BJ (cell line): ENCODE measurements at regions of chr3 and their contacts with region 1.

Region 1: DNA sequence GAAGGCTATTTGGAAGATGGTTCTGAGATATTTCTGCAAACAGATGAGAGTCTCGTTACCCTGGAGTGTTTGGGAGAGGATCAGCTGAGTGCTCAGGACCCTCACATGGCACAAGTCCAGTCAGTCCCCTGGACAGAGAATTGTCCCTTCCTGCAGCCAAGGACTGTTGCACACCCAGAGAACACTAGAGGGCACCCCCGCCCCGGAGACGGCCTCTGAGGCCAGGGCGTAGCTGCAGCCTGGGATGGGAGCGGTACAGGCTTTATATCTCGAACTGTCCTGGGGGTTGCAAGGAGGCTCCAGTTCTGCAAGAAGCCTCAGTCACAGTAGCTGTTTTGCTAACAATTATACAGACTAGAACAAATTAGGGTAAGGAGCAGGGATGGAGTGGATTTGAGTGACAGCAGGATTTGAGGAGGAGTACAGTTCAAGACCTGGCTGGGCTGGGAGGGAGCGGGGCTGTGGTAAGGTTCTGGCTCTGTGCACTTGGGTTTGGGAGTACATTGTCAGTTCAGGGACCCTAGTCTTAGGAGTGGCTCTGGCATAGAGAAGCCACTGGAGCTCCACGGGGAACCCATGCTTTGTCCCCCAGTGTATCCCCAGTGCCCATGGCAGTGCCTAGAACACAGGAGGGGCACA is 67.6 kb upstream of the HACD2 start:
- DNase-seq: no peak
- H3K4me3 ChIP-seq: no peak overlapping the region
- H3K27me3 ChIP-seq: no peaks in the 10 kb centered on the region
- CTCF ChIP-seq: peak; percentile 84

Region 2: GRCh38 chr3:123642182-123642956 is 10.1 kb before region 1 on chr3:
- CTCF ChIA-PET with region 1: interaction called, 104 read pairs
- POLR2A ChIA-PET with region 1: interaction called, 3 read pairs
- DNase-seq: peak; percentile 59
- H3K4me3 ChIP-seq: no peak overlapping the region
- H3K27me3 ChIP-seq: no peaks in the 10 kb centered on the region
- CTCF ChIP-seq: peak; percentile 89

Region 3: GRCh38 chr3:123694366-123695145 is 42.1 kb after region 1 on chr3:
- CTCF ChIA-PET with region 1: interaction called, 17 read pairs
- POLR2A ChIA-PET with region 1: no interaction called
- DNase-seq: no peak
- H3K4me3 ChIP-seq: no peak overlapping the region
- H3K27me3 ChIP-seq: no peaks in the 10 kb centered on the region
- CTCF ChIP-seq: no peak

Region 4: DNA sequence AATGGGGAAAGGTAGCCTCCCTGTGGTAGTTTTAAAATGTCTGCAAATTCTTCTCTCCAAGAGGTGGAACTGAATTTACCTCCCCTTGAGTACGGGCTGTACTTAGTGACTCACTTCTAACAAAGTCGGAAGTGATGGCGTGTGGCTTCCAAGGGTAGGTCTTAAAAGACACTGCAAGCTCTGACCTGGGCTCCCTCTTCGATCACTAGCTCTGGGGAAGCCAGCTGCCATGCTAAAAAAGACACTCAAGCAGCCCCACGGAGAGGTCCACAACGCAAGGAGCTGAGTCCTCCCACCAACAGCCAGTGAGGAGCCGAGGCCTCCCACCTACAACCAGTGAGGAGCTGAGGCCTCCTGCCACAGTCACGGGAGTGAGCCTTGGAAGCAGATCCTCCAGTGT is 54.4 kb after region 1 on chr3:
- CTCF ChIA-PET with region 1: interaction called, 22 read pairs
- POLR2A ChIA-PET with region 1: no interaction called
- DNase-seq: no peak
- H3K4me3 ChIP-seq: no peak overlapping the region
- H3K27me3 ChIP-seq: no peaks in the 10 kb centered on the region
- CTCF ChIP-seq: no peak

Region 5: DNA sequence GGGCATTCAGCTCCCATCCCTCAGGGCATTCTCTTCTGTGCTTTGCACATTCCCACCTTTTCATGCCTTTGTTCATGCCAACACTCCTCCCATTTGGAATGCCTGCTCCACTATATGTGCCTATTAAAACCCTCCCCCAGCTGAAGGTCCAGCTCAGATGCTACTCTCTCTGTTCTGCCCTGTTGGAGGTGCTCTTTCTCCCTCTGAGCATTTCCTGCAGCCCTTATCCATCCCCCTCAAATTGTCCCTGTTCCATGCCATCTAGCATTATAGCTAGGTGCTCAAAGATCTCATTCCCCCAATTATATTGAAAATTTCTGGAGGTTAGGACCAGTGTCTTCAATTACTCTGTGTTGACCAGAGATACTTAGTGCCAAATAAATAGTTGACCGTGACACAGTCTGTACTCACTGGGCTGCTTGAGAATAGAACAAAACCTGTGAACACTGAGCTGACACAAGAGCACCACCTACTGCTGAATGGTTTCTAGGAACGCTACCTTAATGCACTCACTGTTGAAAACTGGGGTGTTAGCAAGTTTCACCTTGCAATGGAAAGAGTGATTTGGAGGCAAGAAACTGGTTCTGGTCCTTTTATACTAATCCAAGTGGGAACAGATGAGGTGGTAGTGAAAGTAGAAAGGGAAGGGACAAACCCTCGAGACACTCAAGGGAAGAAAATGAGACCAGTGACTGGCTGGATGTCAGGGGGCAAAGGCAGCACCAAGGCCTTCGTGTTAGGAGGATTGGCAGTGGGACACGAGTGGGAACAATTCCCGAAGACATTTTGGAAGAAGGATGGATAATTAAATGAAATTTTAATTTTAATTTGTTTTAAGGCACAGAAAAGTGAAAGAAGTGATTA is 629.2 kb after region 1 on chr3:
- CTCF ChIA-PET with region 1: no interaction called
- POLR2A ChIA-PET with region 1: interaction called, 12 read pairs
- DNase-seq: no peak
- H3K4me3 ChIP-seq: no peak overlapping the region
- H3K27me3 ChIP-seq: no peaks in the 10 kb centered on the region
- CTCF ChIP-seq: peak; percentile 60

Region 6: DNA sequence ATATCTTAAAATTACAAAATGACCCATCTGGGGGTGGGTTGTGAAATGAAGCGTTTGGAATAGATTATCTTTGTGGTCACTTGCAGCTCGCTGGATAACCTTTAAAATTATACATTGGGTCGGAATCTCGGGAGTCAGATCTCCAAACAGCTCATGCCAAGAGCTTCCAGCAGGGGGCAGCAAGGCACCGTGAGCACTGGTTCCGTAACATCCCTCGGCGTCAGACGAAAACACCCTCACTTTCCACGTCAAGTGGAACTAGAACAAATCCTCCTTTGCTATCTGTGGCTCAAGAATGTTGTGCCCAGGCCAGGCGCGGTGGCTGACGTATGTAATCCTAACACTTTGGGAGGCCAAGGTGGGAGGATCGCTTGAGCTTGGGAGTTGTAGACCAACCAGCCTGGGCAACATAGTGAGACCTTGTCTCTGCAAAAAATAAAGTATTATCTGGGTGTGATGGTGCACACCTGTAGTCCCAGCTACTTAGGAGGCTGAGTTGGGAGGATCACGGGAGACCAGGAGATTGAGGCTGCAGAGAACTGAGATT is 1108.9 kb after region 1 on chr3:
- CTCF ChIA-PET with region 1: no interaction called
- POLR2A ChIA-PET with region 1: no interaction called
- DNase-seq: peak; percentile 49
- H3K4me3 ChIP-seq: no peak overlapping the region
- H3K27me3 ChIP-seq: no peaks in the 10 kb centered on the region
- CTCF ChIP-seq: peak; percentile 96